Posterior vena cava (tissue), 2 donors: ENCODE measurements at regions of chr13 and their contacts with region 1.

Region 1: GRCh38 chr13:39835253-39835652 is 179.8 kb downstream of the COG6 start:
- DNase-seq: no peak

Region 2: DNA sequence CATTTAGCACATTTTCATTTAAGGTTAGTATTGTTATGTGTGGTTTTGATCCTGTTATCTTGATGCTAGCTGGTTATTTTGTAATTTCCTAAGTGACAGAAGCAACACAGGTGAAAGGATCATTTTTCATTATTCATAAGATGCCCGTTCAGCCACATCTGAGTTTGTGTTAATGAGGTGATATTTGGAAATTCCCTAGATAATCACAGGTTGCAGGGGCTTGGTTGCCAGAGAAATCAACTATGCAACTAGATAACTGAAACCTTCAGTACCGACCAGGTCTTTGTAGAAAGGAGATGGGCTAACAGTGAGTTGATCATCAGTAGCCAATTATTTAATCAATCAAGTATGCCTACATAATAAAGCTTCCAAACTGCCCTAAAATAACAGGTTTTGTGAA is 1606.9 kb before region 1 on chr13:
- intact Hi-C with region 1: loop called in 1 of 2 experiments (anchors 5 kb)
- DNase-seq: no peak

Region 3: DNA sequence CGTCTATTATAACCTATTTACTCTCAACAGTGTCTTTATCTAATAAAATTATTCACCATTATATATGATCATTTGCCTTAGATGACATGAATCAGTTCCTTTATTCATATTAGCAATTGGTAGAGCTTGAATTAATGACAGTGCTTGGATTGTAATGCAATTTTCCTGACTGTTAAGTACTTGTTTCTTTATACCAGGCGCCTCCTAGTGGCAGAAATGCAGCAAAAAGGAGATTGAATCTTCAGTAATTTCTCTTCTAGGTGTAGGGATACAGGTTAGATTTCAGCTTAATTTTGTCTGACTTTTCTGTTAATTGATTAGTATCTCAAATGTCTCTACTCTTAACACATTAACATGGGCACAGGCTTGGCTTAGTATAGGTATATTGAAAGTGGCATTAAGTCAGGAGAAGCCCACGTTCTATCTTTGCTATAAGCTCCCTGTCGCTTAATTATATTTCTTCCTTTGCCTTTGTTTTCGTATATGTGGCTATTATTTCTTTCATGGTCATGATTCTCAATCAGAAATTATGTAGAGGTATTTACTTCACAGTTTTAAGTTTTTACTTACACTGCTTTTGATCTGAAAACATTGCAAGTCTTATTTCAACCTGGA is 223.1 kb before region 1 on chr13:
- intact Hi-C with region 1: no loop called
- DNase-seq: no peak

Region 4: GRCh38 chr13:40615619-40616018 is 780.4 kb after region 1 on chr13:
- intact Hi-C with region 1: loop called in 1 of 2 experiments (anchors 5 kb)
- DNase-seq: no peak

Region 5: DNA sequence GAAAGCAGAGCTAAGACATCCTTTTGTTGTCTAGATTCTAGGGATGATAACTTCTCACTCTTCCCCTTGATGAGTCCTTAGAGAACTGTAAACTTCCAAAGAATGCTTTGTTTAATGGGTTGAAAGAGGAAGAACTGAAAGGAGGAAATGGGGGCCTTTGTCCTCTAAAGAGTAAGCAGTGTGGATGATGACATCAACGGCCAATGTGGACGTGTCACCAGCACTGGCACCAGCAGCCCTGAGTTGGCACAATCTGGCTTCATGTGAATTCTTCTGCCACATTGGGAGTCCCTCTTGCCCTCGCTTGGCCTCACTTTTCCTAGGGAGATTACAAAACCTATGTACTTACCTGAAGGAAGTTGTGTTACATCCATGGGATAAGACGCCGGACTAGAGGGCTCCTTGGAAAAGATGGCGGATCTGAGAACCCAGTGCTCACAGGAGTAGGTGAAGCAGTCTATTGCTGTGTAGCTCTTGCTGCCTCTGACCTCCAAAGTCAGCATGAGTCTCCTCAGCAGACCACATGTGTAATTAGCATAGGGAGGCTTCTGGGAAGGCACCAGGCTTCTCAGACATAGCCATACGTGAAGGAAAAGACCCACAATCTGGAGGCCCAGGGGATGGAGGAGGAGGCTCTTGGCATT is 1684.9 kb after region 1 on chr13:
- intact Hi-C with region 1: no loop called
- DNase-seq: no peak